ENCODE measurements at regions of chr4 and their contacts with region 1.

Region 1: DNA sequence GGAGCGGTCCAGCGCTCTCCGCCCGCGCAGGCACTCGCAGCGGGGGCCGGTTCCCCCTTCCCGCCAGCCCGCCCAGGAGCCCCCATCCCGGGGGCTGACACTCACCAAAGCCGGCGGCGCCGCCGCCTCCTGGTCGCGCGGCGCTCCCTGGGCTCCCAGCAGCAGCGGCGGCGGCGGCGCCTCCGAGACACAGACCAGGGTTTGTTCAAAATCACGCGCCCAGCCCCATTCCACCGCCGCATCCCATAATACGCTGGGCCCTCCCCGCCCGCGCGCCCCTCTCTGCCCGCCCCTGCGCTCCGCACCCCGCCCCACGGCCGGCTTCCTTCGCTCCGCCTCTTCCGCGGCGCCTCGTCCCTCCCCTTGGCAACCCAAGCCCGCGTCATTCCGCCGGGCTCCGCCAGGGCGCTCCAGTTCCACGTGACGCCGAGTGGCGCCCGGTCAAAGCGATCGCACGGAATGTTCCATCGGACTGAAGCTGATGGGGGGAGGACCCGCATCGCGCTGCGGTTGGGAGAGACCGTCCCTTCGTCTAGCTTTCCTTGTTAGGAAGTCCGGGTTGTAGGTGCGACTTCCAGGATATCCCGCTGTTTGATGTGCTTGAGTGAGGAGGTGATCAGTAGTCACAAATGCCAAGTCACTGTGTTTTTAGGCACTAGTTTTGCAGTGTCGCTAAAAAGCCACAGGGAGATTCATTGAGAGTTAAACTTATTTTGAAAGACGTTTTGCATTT is 2.2 kb upstream of the LIN54 start:
- DNase-seq: peak; percentile 96 to 98
- ATAC-seq: peak; percentile 88 to 97 (median 89)
- H3K4me3 ChIP-seq: peak overlapping the region; percentile 94
- H3K4me3 Mint-ChIP-seq: peak overlapping the region; percentile 94
- H3K27ac ChIP-seq: peak overlapping the region; percentile 80
- H3K27ac Mint-ChIP-seq: peak overlapping the region; percentile 98 to 100
- H3K4me1 ChIP-seq: peaks cover 16% of the 10 kb centered on the region
- H3K4me1 Mint-ChIP-seq: peaks cover 48 to 53% of the 10 kb centered on the region in 2 donors
- H3K27me3 ChIP-seq: no peaks in the 10 kb centered on the region
- H3K27me3 Mint-ChIP-seq: no peaks in the 10 kb centered on the region
- CTCF ChIP-seq: peak; percentile 48

Region 2: GRCh38 chr4:82373816-82374625 is 638.8 kb before region 1 on chr4 and contains the start of gene HNRNPD:
- intact Hi-C with region 1: loop called (anchors 2 kb)
- DNase-seq: peak; percentile 84 to 98
- ATAC-seq: peak; percentile 76 to 94 (median 84)
- H3K4me3 ChIP-seq: peak within 1 kb of the TSS; percentile 98
- H3K4me3 Mint-ChIP-seq: peak within 1 kb of the TSS; percentile 100
- H3K27ac ChIP-seq: peak within 1 kb of the TSS; percentile 99
- H3K27ac Mint-ChIP-seq: peak within 1 kb of the TSS; percentile 99 to 100
- H3K4me1 ChIP-seq: peaks cover 15% of the 10 kb centered on the region
- H3K4me1 Mint-ChIP-seq: peaks cover 57 to 69% of the 10 kb centered on the region in 2 donors
- H3K27me3 ChIP-seq: no peaks in the 10 kb centered on the region
- H3K27me3 Mint-ChIP-seq: peaks cover 0 to 3% of the 10 kb centered on the region in 2 donors
- CTCF ChIP-seq: no peak
- total RNA-seq, gene HNRNPD: 225 to 285 (median 270) TPM

Region 3: GRCh38 chr4:82629238-82630000 is 383.4 kb before region 1 on chr4:
- intact Hi-C with region 1: no loop called
- DNase-seq: no peak
- ATAC-seq: no peak
- H3K4me3 ChIP-seq: no peak overlapping the region
- H3K4me3 Mint-ChIP-seq: no peak overlapping the region
- H3K27ac ChIP-seq: no peak overlapping the region
- H3K27ac Mint-ChIP-seq: no peak overlapping the region
- H3K4me1 ChIP-seq: no peaks in the 10 kb centered on the region
- H3K4me1 Mint-ChIP-seq: peaks cover 0 to 4% of the 10 kb centered on the region in 2 donors
- H3K27me3 ChIP-seq: no peaks in the 10 kb centered on the region
- H3K27me3 Mint-ChIP-seq: no peaks in the 10 kb centered on the region
- CTCF ChIP-seq: no peak

Region 4: DNA sequence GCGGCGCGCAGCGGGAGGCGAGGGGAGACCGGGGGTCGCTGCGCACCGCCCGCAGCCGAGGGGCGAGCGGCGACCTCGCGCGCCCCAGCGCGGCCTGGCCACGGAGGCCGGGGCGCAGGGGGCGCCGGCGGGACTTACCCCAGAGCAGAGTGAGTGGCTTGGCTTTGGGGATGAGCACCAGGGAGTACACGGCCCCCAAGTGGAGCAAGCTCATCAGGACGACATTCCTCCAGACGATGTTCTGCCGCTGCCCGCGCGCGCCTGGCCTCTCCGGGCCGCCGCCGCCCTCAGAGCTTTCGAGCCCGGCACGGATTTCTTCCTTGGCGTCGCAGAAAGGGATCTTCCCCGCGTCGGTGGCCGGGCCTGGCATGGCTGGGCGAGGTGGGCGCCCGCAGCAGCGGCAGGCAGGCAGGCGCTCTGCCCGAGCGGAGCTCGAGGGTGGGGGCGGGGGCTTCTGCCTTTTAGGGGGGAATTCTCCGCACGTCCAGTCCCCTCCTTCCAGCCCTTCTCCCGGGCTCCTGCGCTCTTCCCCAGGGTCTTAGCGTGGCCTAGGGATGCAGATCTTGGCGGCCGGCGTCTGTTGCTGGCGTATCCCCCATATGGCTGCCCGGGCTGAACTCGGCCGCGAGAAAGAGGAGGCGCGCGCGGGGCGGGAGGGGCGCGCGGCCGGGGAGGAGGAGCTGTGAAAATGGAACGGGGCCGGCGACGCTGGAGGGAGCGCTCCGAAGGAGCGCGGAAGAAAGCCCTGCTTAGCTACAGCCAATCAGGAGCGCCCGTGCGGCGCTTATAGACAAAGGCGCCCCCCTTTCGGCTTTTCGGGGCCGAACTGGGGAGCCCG is 214.5 kb before region 1 on chr4 and contains the start of gene SCD5:
- intact Hi-C with region 1: loop called (anchors 5 kb)
- DNase-seq: peak; percentile 72
- ATAC-seq: peak; percentile 94 to 97 (median 96)
- H3K4me3 ChIP-seq: peak within 1 kb of the TSS; percentile 73
- H3K4me3 Mint-ChIP-seq: peak within 1 kb of the TSS; percentile 91
- H3K27ac ChIP-seq: no peak within 1 kb of the TSS
- H3K27ac Mint-ChIP-seq: peak within 1 kb of the TSS in 1 of 2 donors; percentile 85
- H3K4me1 ChIP-seq: peaks cover 20% of the 10 kb centered on the region
- H3K4me1 Mint-ChIP-seq: peaks cover 24 to 34% of the 10 kb centered on the region in 2 donors
- H3K27me3 ChIP-seq: peaks cover 6% of the 10 kb centered on the region
- H3K27me3 Mint-ChIP-seq: peaks cover 8 to 20% of the 10 kb centered on the region in 2 donors
- CTCF ChIP-seq: no peak
- total RNA-seq, gene SCD5: 8.9 to 11.6 (median 9.0) TPM

Region 5: GRCh38 chr4:82900331-82901128 is 112.3 kb before region 1 on chr4 and contains the start of gene THAP9:
- intact Hi-C with region 1: loop called (anchors 2 kb)
- DNase-seq: peak; percentile 95 to 99
- ATAC-seq: peak; percentile 82 to 96 (median 86)
- H3K4me3 ChIP-seq: peak within 1 kb of the TSS; percentile 91
- H3K4me3 Mint-ChIP-seq: no peak within 1 kb of the TSS
- H3K27ac ChIP-seq: peak within 1 kb of the TSS; percentile 100
- H3K27ac Mint-ChIP-seq: no peak within 1 kb of the TSS
- H3K4me1 ChIP-seq: peaks cover 5% of the 10 kb centered on the region
- H3K4me1 Mint-ChIP-seq: peaks cover 10 to 11% of the 10 kb centered on the region in 2 donors
- H3K27me3 ChIP-seq: no peaks in the 10 kb centered on the region
- H3K27me3 Mint-ChIP-seq: no peaks in the 10 kb centered on the region
- CTCF ChIP-seq: no peak
- total RNA-seq, gene THAP9: 1.6 to 2.6 (median 2.1) TPM

Region 6: DNA sequence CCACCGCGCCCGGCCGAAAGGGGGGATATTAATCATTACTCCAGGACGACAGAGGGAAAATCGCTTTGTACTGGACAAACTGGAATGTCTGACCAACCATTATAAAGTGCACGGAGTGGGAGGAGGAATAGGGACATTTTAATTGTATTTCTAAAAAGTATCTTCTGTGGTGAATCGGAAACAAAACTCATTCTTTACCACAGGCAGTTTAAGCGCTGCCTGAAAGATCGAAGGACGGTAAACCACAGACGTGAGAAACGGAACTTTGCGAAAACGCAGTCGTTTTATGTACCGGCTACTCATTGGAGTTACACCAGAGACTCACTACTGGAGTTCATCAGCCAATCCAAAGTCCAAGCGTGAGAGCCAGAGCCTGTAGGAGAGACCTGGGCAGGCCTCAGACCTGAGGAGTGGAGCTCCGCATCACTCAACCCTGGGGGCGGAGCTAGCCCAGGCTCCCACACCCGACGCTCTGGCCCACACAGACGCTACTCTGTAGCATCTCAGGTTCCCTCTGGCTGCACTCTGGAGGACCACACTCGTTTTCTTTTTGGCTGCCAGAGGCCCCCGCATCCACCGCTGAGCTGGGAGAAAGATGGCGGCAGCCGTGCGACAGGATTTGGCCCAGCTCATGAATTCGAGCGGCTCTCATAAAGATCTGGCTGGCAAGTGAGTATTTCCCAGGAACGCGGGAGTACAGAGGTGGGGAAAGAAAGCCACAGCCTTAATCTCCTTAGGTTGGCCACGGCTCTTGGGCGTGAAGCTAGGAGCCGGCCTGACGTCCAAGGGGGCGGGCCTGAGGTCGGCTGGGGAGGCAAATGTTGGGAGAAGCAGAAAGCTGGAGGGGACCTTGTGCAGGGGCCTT is 22.0 kb after region 1 on chr4 and contains the start of gene COPS4:
- intact Hi-C with region 1: loop called (anchors 1 kb)
- DNase-seq: peak; percentile 90 to 99
- ATAC-seq: peak; percentile 95 to 100 (median 95)
- H3K4me3 ChIP-seq: peak within 1 kb of the TSS; percentile 85
- H3K4me3 Mint-ChIP-seq: peak within 1 kb of the TSS; percentile 100
- H3K27ac ChIP-seq: peak within 1 kb of the TSS; percentile 87
- H3K27ac Mint-ChIP-seq: peak within 1 kb of the TSS; percentile 95 to 99
- H3K4me1 ChIP-seq: peaks cover 11% of the 10 kb centered on the region
- H3K4me1 Mint-ChIP-seq: peaks cover 25 to 30% of the 10 kb centered on the region in 2 donors
- H3K27me3 ChIP-seq: no peaks in the 10 kb centered on the region
- H3K27me3 Mint-ChIP-seq: no peaks in the 10 kb centered on the region
- CTCF ChIP-seq: peak; percentile 25
- total RNA-seq, gene COPS4: 35.8 to 39.8 (median 36.1) TPM

Region 7: GRCh38 chr4:83212041-83212851 is 199.4 kb after region 1 on chr4:
- intact Hi-C with region 1: loop called (anchors 1 kb)
- DNase-seq: peak; percentile 65 to 89
- ATAC-seq: peak; percentile 85 to 95 (median 91)
- H3K4me3 ChIP-seq: no peak overlapping the region
- H3K4me3 Mint-ChIP-seq: peak overlapping the region; percentile 83
- H3K27ac ChIP-seq: peak overlapping the region; percentile 75
- H3K27ac Mint-ChIP-seq: peak overlapping the region; percentile 92 to 93
- H3K4me1 ChIP-seq: peaks cover 64% of the 10 kb centered on the region
- H3K4me1 Mint-ChIP-seq: peaks cover 94% of the 10 kb centered on the region in 2 donors
- H3K27me3 ChIP-seq: no peaks in the 10 kb centered on the region
- H3K27me3 Mint-ChIP-seq: no peaks in the 10 kb centered on the region
- CTCF ChIP-seq: no peak

Measured in natural killer cell (primary cell).